ENCODE measurements at regions of chr10 and their contacts with region 1.

Region 1: DNA sequence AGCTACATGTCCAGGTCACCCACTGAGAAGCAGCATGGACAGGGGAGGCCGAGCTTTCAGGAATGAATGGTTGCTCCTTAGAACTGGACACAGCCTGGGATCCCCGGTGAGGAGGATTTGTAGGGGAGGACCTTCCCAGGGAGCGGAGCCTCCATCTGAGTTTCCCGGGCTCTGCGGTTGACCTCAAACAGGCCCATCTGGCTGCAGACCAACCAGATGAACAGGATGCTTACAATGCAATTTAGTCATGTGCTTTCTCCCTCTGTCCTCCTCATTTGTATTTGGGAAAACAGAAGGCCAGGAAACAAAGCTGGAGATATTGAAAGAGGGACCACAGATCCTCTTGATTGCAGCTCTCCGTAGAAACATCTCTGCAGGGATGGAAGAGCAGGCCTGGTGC is 104.8 kb downstream of the EMX2 start:
- DNase-seq: no peak
- ATAC-seq: no peak
- H3K4me3 ChIP-seq: no peak overlapping the region
- H3K27ac ChIP-seq: no peak overlapping the region
- H3K4me1 ChIP-seq: peaks cover 13% of the 10 kb centered on the region; the same call in 1 of the 2 replicates
- H3K27me3 ChIP-seq: no peaks in the 10 kb centered on the region
- CTCF ChIP-seq: no peak
- EP300 ChIP-seq: no peak
- POLR2A ChIP-seq: no peak
- RAD21 ChIP-seq: no peak

Region 2: GRCh38 chr10:117622471-117623184 is 24.7 kb before region 1 on chr10:
- CTCF ChIA-PET with region 1: interaction called, 55 read pairs
- POLR2A ChIA-PET with region 1: interaction called, 56 read pairs
- RAD21 ChIA-PET with region 1: interaction called, 138 read pairs
- SMC1A ChIA-PET with region 1: interaction called, 300 read pairs
- in situ Hi-C with region 1: no loop called
- intact Hi-C with region 1: loop called (anchors 2 kb)
- DNase-seq: no peak
- ATAC-seq: peak; percentile 71
- H3K4me3 ChIP-seq: no peak overlapping the region
- H3K27ac ChIP-seq: no peak overlapping the region
- H3K4me1 ChIP-seq: no peaks in the 10 kb centered on the region
- H3K27me3 ChIP-seq: no peaks in the 10 kb centered on the region
- CTCF ChIP-seq: no peak
- EP300 ChIP-seq: peak in 1 of 2 experiments; percentile 20; a peak in 2 of 4 replicates
- POLR2A ChIP-seq: no peak
- RAD21 ChIP-seq: no peak